Vagina (tissue), 2 donors: ENCODE measurements at regions of chr4 and their contacts with region 1.

Region 1: GRCh38 chr4:139493176-139493575 is 39.3 kb downstream of the RAB33B start:
- DNase-seq: no peak
- H3K4me3 ChIP-seq: no peak overlapping the region
- H3K27ac ChIP-seq: no peak overlapping the region
- H3K4me1 ChIP-seq: peaks cover 4% of the 10 kb centered on the region
- H3K27me3 ChIP-seq: no peaks in the 10 kb centered on the region
- CTCF ChIP-seq: no peak
- POLR2A ChIP-seq: no peak

Region 2: DNA sequence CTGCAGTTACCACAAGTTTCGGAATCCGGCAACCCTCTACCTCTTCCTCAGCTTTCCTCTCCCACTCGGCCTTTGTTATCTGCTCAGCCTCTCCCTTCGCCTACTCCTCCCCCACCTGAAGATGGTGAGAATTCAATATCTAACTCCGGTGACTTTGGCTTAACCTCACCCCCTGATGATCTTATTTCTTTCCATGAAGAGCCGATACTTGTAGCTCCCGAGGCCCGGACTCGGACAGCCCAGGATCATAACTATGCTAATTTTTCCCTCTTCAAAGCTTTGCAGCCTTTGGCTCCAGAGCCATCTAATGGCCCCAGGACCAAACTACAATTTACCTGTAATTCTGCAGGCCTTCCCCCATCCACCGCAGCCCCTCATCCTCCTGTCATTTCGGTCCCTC is 140.5 kb after region 1 on chr4:
- intact Hi-C with region 1: loop called (anchors 10 kb)
- DNase-seq: no peak
- H3K4me3 ChIP-seq: peak overlapping the region; percentile 26 to 32
- H3K27ac ChIP-seq: no peak overlapping the region
- H3K4me1 ChIP-seq: no peaks in the 10 kb centered on the region
- H3K27me3 ChIP-seq: no peaks in the 10 kb centered on the region
- CTCF ChIP-seq: peak; percentile 5 to 32 (median 23)
- POLR2A ChIP-seq: no peak

Region 3: DNA sequence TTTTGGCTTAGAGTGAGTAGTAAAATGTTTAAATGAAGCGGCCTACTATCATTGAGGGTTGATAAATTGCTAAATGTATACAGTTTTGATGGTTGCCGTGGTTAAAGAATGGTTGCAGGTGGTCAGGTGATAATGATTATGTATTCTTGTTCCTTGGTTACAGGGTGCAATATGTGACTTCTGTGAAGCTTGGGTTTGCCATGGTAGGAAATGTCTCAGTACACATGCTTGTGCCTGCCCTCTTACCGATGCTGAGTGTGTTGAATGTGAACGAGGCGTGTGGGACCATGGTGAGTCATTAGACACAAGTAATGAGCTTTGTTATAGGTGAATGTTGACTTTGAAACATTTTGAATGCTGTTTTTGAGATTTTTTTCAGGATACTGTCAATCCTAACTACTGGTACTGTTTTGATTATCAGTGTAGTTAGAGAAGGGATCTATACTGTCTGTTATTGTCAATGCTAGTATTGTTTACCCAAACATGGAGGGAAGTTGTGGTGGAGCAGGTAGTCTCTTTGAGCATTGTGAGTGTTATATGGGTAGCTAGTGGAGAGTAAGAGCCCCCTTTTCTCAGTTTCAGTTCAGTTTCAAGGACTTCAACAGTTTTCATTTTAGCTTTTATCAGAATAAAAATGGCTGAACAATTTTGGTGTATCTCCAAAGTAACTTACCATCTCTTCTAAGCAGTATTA is 1736.4 kb after region 1 on chr4:
- intact Hi-C with region 1: no loop called
- DNase-seq: no peak
- H3K4me3 ChIP-seq: no peak overlapping the region
- H3K27ac ChIP-seq: no peak overlapping the region
- H3K4me1 ChIP-seq: no peaks in the 10 kb centered on the region
- H3K27me3 ChIP-seq: no peaks in the 10 kb centered on the region
- CTCF ChIP-seq: no peak
- POLR2A ChIP-seq: no peak

Region 4: DNA sequence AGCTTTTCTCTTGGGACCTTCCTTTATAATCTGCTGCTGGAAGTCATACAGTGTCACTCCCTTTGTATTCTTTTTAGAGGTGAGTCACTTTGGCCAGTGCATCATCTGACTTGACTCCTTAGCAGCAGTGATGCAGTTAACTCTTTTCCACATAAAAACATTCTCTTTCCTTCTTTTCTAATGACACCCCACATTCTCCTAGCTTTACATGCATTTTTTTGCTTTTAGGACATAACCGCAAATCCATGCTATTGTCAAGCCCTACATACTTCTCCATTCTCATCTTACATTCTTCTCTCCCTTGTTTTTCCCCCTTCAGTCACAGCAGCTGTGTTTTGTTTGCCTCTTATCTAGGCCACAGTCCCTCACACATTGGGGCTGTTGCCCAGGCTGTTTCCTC is 1782.7 kb after region 1 on chr4:
- intact Hi-C with region 1: no loop called
- DNase-seq: no peak
- H3K4me3 ChIP-seq: no peak overlapping the region
- H3K27ac ChIP-seq: no peak overlapping the region
- H3K4me1 ChIP-seq: no peaks in the 10 kb centered on the region
- H3K27me3 ChIP-seq: no peaks in the 10 kb centered on the region
- CTCF ChIP-seq: no peak
- POLR2A ChIP-seq: no peak